CD14-positive monocyte (primary cell): ENCODE measurements at regions of chr2 and their contacts with region 1.

Region 1: GRCh38 chr2:181742922-181743722 is 62.8 kb upstream of the NEUROD1 start:
- DNase-seq: peak; percentile 42 to 55 (median 52)
- H3K4me3 ChIP-seq: no peak overlapping the region
- H3K4me3 Mint-ChIP-seq: no peak overlapping the region
- H3K27ac ChIP-seq: no peak overlapping the region
- H3K27ac Mint-ChIP-seq: no peak overlapping the region
- H3K4me1 ChIP-seq: no peaks in the 10 kb centered on the region
- H3K4me1 Mint-ChIP-seq: no peaks in the 10 kb centered on the region
- H3K27me3 ChIP-seq: no peaks in the 10 kb centered on the region
- H3K27me3 Mint-ChIP-seq: no peaks in the 10 kb centered on the region
- CTCF ChIP-seq: peak; percentile 76

Region 2: GRCh38 chr2:181642086-181642485 is 101.0 kb before region 1 on chr2:
- intact Hi-C with region 1: no loop called
- DNase-seq: no peak
- H3K4me3 ChIP-seq: no peak overlapping the region
- H3K4me3 Mint-ChIP-seq: no peak overlapping the region
- H3K27ac ChIP-seq: no peak overlapping the region
- H3K27ac Mint-ChIP-seq: no peak overlapping the region
- H3K4me1 ChIP-seq: no peaks in the 10 kb centered on the region
- H3K4me1 Mint-ChIP-seq: peaks cover 5% of the 10 kb centered on the region
- H3K27me3 ChIP-seq: no peaks in the 10 kb centered on the region
- H3K27me3 Mint-ChIP-seq: peaks cover 0 to 1% (median 0%) of the 10 kb centered on the region in 3 donors
- CTCF ChIP-seq: no peak

Region 3: DNA sequence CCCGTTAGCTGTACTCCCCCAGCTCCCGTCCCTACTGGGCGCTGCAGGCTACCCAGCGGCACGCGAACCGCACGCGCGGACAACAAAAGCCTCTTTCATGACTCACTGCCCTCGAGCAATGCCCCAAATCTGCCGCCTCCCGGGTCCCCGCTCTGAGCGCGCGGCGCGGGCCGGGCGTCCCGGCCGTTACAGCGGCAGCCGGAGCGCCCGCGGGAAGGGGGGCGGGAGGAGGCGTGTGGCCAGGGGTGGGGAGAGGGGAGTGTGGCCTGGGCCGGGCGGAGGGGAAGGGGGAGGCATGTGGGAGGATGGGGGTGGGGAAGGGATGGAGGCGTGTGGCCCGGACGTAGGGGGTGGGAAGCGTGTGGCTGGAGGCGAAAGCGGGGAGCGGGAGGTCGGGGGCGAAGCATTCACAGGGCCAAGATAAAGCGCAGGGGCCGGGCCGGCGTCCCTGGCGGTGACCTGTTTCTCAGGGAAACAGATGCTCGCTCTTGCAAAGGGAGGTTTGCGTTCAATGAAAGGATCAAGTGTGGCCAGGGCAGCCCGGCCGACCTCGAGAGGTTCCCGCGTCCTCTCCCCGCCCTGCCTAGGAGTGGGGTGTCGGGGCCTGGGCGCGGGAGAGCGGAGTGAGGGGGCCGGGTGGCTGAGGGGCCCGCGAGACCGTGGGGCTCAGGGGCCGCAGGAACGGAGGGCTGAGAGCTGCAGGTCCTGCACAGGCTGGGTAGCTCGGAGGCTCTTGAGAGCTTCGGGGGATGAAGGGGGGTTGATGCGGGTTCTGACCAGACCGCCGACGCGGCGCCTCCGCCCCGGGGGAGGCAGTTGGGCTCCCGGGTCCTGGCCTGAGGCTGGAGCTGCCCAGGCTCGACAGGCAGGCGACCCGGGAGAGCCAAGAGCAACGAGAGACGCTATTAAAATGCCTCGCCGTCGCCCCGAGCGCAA is 59.3 kb before region 1 on chr2:
- intact Hi-C with region 1: no loop called
- DNase-seq: peak in 1 of 3 donors; percentile 31
- H3K4me3 ChIP-seq: peak overlapping the region in 1 of 3 experiments; percentile 30
- H3K4me3 Mint-ChIP-seq: peak overlapping the region; percentile 60 to 95
- H3K27ac ChIP-seq: no peak overlapping the region
- H3K27ac Mint-ChIP-seq: no peak overlapping the region
- H3K4me1 ChIP-seq: peaks cover 31 to 34% of the 10 kb centered on the region in 2 donors
- H3K4me1 Mint-ChIP-seq: peaks cover 52% of the 10 kb centered on the region
- H3K27me3 ChIP-seq: peaks cover 82 to 87% of the 10 kb centered on the region in 2 donors
- H3K27me3 Mint-ChIP-seq: peaks cover 86 to 90% (median 88%) of the 10 kb centered on the region in 3 donors
- CTCF ChIP-seq: no peak

Region 4: GRCh38 chr2:181904022-181904632 is 161.0 kb after region 1 on chr2:
- intact Hi-C with region 1: loop called (anchors 5 to 10 kb)
- DNase-seq: peak; percentile 7 to 37 (median 24)
- H3K4me3 ChIP-seq: no peak overlapping the region
- H3K4me3 Mint-ChIP-seq: no peak overlapping the region
- H3K27ac ChIP-seq: peak overlapping the region in 1 of 2 donors; percentile 59
- H3K27ac Mint-ChIP-seq: peak overlapping the region in 5 of 7 donors; percentile 23 to 77 (median 59)
- H3K4me1 ChIP-seq: peaks cover 13 to 26% of the 10 kb centered on the region in 2 donors
- H3K4me1 Mint-ChIP-seq: peaks cover 37% of the 10 kb centered on the region
- H3K27me3 ChIP-seq: no peaks in the 10 kb centered on the region
- H3K27me3 Mint-ChIP-seq: no peaks in the 10 kb centered on the region
- CTCF ChIP-seq: peak; percentile 69

Region 5: DNA sequence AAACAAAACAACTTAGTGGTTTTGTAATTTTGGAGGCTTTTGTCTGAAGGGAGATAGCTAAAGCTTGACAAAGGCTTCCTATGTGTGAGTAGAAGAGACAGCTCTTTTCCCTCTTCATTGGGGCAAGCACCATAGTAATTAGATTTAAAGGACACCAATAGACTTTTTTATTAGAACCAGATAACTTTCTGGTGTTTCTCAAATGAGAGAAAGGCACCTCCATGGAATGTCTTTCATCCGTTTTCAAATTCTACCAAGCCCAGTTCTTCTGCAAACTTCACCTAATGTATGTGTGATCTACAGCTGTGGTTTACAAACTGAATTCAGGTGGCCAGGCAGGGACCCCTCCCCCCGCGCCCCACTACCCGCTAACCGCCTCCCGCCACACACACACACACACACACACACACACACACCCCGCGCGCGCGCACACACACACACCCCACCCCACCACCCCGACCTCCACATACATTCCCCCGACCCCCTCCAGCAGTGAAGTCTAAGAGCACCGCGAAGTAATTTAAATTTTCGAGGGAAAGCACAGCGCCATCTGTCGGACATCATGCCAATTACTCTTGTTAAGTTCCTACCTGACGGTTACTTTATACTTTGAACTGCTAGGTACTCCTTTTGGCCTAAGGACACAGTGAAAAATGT is 210.9 kb after region 1 on chr2:
- intact Hi-C with region 1: loop called in 1 of 2 experiments (anchors 10 kb)
- DNase-seq: peak; percentile 34 to 71 (median 53)
- H3K4me3 ChIP-seq: peak overlapping the region; percentile 18 to 63 (median 37)
- H3K4me3 Mint-ChIP-seq: peak overlapping the region; percentile 49 to 64
- H3K27ac ChIP-seq: no peak overlapping the region
- H3K27ac Mint-ChIP-seq: peak overlapping the region in 2 of 7 donors; percentile 68 to 82
- H3K4me1 ChIP-seq: peaks cover 6 to 7% of the 10 kb centered on the region in 2 donors
- H3K4me1 Mint-ChIP-seq: peaks cover 11% of the 10 kb centered on the region
- H3K27me3 ChIP-seq: no peaks in the 10 kb centered on the region
- H3K27me3 Mint-ChIP-seq: peaks cover 0 to 2% (median 0%) of the 10 kb centered on the region in 3 donors
- CTCF ChIP-seq: peak; percentile 72

Region 6: GRCh38 chr2:182077451-182078142 is 334.5 kb after region 1 on chr2:
- intact Hi-C with region 1: loop called (anchors 5 to 10 kb)
- DNase-seq: peak; percentile 7 to 35 (median 34)
- H3K4me3 ChIP-seq: no peak overlapping the region
- H3K4me3 Mint-ChIP-seq: no peak overlapping the region
- H3K27ac ChIP-seq: no peak overlapping the region
- H3K27ac Mint-ChIP-seq: no peak overlapping the region
- H3K4me1 ChIP-seq: peaks cover 0 to 13% of the 10 kb centered on the region in 2 donors
- H3K4me1 Mint-ChIP-seq: peaks cover 5% of the 10 kb centered on the region
- H3K27me3 ChIP-seq: no peaks in the 10 kb centered on the region
- H3K27me3 Mint-ChIP-seq: no peaks in the 10 kb centered on the region
- CTCF ChIP-seq: peak; percentile 71